OCI-LY7 (cell line): ENCODE measurements at regions of chr4 and their contacts with region 1.

Region 1: GRCh38 chr4:110049951-110050925 is 137.6 kb downstream of the EGF start:
- DNase-seq: peak; percentile 58
- H3K4me3 ChIP-seq: no peak overlapping the region
- H3K27ac ChIP-seq: no peak overlapping the region
- H3K4me1 ChIP-seq: no peaks in the 10 kb centered on the region
- CTCF ChIP-seq: peak; percentile 92

Region 2: GRCh38 chr4:109511414-109511813 is 538.8 kb before region 1 on chr4:
- CTCF ChIA-PET with region 1: no interaction called
- POLR2A ChIA-PET with region 1: no interaction called
- intact Hi-C with region 1: no loop called
- DNase-seq: no peak
- H3K4me3 ChIP-seq: no peak overlapping the region
- H3K27ac ChIP-seq: no peak overlapping the region
- H3K4me1 ChIP-seq: no peaks in the 10 kb centered on the region
- CTCF ChIP-seq: no peak

Region 3: GRCh38 chr4:109850601-109851000 is 199.6 kb before region 1 on chr4:
- CTCF ChIA-PET with region 1: no interaction called
- POLR2A ChIA-PET with region 1: no interaction called
- intact Hi-C with region 1: no loop called
- DNase-seq: no peak
- H3K4me3 ChIP-seq: no peak overlapping the region
- H3K27ac ChIP-seq: no peak overlapping the region
- H3K4me1 ChIP-seq: no peaks in the 10 kb centered on the region
- CTCF ChIP-seq: no peak

Region 4: GRCh38 chr4:110211007-110211769 is 160.9 kb after region 1 on chr4:
- CTCF ChIA-PET with region 1: interaction called, 3 read pairs
- POLR2A ChIA-PET with region 1: interaction called, 3 read pairs
- intact Hi-C with region 1: loop called (anchors 1 kb)
- DNase-seq: peak; percentile 66
- H3K4me3 ChIP-seq: no peak overlapping the region
- H3K27ac ChIP-seq: no peak overlapping the region
- H3K4me1 ChIP-seq: no peaks in the 10 kb centered on the region
- CTCF ChIP-seq: peak; percentile 95